ENCODE measurements at regions of chr10 and their contacts with region 1.

Region 1: DNA sequence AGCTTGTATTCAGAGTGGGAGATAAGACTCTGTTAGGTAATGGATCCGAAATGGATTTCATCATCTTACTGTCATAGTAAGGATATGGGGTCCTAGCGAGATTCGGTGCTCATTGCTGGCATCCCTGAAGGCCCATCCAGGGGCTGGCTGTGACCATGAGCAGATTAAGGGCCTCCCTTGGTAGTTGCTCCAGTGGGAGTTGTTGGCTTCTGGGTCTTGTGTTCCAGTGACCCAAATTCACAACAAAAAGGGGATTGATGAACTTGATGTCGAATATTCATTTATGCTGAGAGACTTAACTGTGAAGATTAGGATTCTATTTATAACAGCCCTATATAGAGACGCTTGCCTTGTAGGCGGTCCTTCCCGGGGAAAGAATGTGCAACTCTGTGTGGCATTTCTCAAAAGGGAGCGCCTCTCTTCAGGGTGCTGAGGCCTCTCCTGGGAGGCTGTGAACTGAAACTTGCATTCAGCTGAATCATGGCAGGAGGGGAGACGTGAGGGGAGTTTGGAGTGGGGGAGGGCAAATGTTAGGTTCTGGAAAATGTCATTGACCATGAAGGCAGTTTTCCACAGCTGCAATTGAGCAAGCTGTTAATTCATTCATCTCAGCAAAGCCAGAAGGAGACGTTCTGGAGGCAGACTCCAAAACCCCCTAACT is 233.1 kb upstream of the FZD8 start:
- DNase-seq: no peak
- ATAC-seq: no peak
- H3K4me3 ChIP-seq: no peak overlapping the region
- H3K27ac ChIP-seq: no peak overlapping the region
- H3K4me1 ChIP-seq: no peaks in the 10 kb centered on the region
- H3K27me3 ChIP-seq: no peaks in the 10 kb centered on the region
- CTCF ChIP-seq: no peak

Region 2: DNA sequence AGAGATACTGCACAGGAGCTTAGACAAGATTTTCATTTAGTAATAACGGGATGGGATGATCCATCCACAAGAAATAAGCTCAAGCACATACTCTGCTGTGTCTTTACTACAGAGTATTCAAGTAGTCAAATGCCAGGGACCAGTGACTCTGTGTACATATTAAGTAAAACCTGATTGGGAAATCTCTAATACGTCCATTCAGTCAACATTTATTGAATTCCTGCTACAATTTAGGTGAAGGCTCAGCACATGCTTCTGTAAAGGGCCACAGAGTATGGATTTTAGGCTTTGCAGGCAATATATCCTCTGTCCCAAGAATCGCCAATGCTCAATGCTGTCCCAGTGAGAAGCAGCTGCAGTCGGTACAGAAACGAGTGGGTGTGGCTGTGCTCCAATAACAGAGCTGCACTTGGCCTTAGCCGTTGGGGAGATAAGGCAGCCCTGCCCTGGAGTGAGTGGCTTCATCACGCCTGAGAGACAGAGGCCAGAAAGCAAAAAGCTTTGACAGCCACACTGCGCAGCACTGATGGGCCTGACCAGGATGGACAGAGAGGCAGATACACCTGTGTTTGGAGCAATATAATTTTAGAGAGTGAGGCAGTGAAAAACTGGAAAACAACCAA is 1246.9 kb before region 1 on chr10:
- CTCF ChIA-PET with region 1: no interaction called
- POLR2A ChIA-PET with region 1: no interaction called
- in situ Hi-C with region 1: no loop called
- intact Hi-C with region 1: no loop called
- DNase-seq: no peak
- ATAC-seq: no peak
- H3K4me3 ChIP-seq: no peak overlapping the region
- H3K27ac ChIP-seq: no peak overlapping the region
- H3K4me1 ChIP-seq: no peaks in the 10 kb centered on the region
- H3K27me3 ChIP-seq: no peaks in the 10 kb centered on the region
- CTCF ChIP-seq: no peak

Region 3: DNA sequence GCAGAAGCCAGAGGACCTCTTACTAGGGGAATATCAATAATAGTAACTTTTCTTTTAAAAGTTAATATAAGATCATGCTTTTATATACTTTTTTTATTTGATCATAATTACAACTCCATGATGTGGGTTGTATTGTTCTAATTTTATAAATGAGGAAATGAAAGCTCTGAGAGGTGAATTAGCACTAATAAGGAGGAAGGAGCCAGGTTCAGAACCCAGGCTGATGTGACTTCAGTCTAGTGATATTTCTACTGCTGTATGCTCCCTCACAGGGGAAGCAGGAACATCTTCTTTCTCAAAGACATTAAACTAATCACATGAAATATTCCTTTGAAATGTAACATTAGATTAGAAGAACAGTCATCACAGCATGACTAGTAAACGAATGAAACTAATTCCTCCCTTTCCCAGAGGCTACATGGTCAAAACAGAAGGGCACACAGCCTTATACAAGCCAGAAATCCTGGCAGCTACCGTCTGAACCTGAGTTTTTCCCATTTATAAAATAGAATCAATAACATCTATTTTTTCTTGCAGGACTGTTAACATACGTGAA is 351.4 kb before region 1 on chr10:
- CTCF ChIA-PET with region 1: no interaction called
- POLR2A ChIA-PET with region 1: no interaction called
- in situ Hi-C with region 1: no loop called
- intact Hi-C with region 1: no loop called
- DNase-seq: no peak
- ATAC-seq: no peak
- H3K4me3 ChIP-seq: no peak overlapping the region
- H3K27ac ChIP-seq: no peak overlapping the region
- H3K4me1 ChIP-seq: no peaks in the 10 kb centered on the region
- H3K27me3 ChIP-seq: no peaks in the 10 kb centered on the region
- CTCF ChIP-seq: no peak

Region 4: GRCh38 chr10:36462194-36462593 is 587.0 kb after region 1 on chr10:
- CTCF ChIA-PET with region 1: no interaction called
- POLR2A ChIA-PET with region 1: no interaction called
- in situ Hi-C with region 1: no loop called
- intact Hi-C with region 1: no loop called
- DNase-seq: no peak
- ATAC-seq: no peak
- H3K4me3 ChIP-seq: no peak overlapping the region
- H3K27ac ChIP-seq: no peak overlapping the region
- H3K4me1 ChIP-seq: no peaks in the 10 kb centered on the region
- H3K27me3 ChIP-seq: no peaks in the 10 kb centered on the region
- CTCF ChIP-seq: no peak

Region 5: DNA sequence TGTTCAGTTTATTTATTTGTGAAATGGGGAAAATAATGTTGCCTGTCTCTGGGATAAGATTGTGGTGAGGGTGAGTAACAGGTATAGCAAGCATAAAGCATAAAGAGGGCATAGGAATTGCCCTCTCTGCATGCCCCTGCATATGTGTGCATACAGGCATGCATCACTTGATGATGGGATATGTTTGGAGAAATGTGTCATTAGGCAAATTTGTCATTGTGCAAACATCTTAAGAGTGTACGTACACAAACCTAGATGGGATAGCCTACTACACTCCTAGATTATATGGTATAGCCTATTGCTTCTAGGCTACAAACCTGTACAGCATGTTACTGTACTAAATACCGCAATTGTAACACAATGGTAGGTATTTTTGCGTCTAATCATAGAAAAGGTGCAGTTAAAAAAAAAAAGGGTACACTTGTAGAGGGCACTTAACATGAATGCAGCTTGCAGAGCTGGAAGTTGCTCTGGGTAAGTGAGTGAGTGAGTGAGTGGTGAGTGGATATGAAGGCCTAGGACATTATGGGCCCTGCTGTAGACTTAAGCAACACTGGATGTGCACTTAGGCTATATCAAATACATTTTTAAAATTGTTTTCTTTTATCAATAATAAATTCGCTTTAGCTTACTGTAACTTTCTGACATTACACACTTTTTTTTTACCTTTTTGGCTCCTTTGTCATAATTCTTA is 863.7 kb after region 1 on chr10:
- CTCF ChIA-PET with region 1: interaction called, 10 read pairs
- POLR2A ChIA-PET with region 1: no interaction called
- in situ Hi-C with region 1: no loop called
- intact Hi-C with region 1: no loop called
- DNase-seq: peak; percentile 46
- ATAC-seq: no peak; the same call in 1 of the 2 replicates
- H3K4me3 ChIP-seq: no peak overlapping the region
- H3K27ac ChIP-seq: no peak overlapping the region
- H3K4me1 ChIP-seq: no peaks in the 10 kb centered on the region
- H3K27me3 ChIP-seq: no peaks in the 10 kb centered on the region
- CTCF ChIP-seq: no peak

Region 6: GRCh38 chr10:36748128-36748871 is 873.2 kb after region 1 on chr10:
- CTCF ChIA-PET with region 1: no interaction called
- POLR2A ChIA-PET with region 1: interaction called, 12 read pairs
- in situ Hi-C with region 1: no loop called
- intact Hi-C with region 1: no loop called
- DNase-seq: no peak
- ATAC-seq: no peak
- H3K4me3 ChIP-seq: no peak overlapping the region
- H3K27ac ChIP-seq: no peak overlapping the region
- H3K4me1 ChIP-seq: no peaks in the 10 kb centered on the region
- H3K27me3 ChIP-seq: no peaks in the 10 kb centered on the region
- CTCF ChIP-seq: no peak

Measured in Panc1 (cell line).